Calu3 (cell line): ENCODE measurements at regions of chrX and their contacts with region 1.

Region 1: GRCh38 chrX:117990438-117990837 is 126.2 kb downstream of the KLHL13 start:
- DNase-seq: no peak
- H3K4me3 Mint-ChIP-seq: no peak overlapping the region
- H3K27ac Mint-ChIP-seq: no peak overlapping the region
- H3K4me1 Mint-ChIP-seq: no peaks in the 10 kb centered on the region
- H3K27me3 Mint-ChIP-seq: no peaks in the 10 kb centered on the region
- CTCF ChIP-seq: no peak

Region 2: GRCh38 chrX:118066867-118067515 is 76.6 kb after region 1 on chrX:
- CTCF ChIA-PET with region 1: no interaction called
- intact Hi-C with region 1: loop called (anchors 5 kb)
- DNase-seq: no peak
- H3K4me3 Mint-ChIP-seq: no peak overlapping the region
- H3K27ac Mint-ChIP-seq: no peak overlapping the region
- H3K4me1 Mint-ChIP-seq: no peaks in the 10 kb centered on the region
- H3K27me3 Mint-ChIP-seq: no peaks in the 10 kb centered on the region
- CTCF ChIP-seq: no peak

Region 3: GRCh38 chrX:118100091-118100490 is 109.7 kb after region 1 on chrX:
- CTCF ChIA-PET with region 1: no interaction called
- intact Hi-C with region 1: no loop called
- DNase-seq: no peak
- H3K4me3 Mint-ChIP-seq: no peak overlapping the region
- H3K27ac Mint-ChIP-seq: no peak overlapping the region
- H3K4me1 Mint-ChIP-seq: no peaks in the 10 kb centered on the region
- H3K27me3 Mint-ChIP-seq: no peaks in the 10 kb centered on the region
- CTCF ChIP-seq: no peak